ENCODE measurements at regions of chr12 and their contacts with region 1.

Region 1: DNA sequence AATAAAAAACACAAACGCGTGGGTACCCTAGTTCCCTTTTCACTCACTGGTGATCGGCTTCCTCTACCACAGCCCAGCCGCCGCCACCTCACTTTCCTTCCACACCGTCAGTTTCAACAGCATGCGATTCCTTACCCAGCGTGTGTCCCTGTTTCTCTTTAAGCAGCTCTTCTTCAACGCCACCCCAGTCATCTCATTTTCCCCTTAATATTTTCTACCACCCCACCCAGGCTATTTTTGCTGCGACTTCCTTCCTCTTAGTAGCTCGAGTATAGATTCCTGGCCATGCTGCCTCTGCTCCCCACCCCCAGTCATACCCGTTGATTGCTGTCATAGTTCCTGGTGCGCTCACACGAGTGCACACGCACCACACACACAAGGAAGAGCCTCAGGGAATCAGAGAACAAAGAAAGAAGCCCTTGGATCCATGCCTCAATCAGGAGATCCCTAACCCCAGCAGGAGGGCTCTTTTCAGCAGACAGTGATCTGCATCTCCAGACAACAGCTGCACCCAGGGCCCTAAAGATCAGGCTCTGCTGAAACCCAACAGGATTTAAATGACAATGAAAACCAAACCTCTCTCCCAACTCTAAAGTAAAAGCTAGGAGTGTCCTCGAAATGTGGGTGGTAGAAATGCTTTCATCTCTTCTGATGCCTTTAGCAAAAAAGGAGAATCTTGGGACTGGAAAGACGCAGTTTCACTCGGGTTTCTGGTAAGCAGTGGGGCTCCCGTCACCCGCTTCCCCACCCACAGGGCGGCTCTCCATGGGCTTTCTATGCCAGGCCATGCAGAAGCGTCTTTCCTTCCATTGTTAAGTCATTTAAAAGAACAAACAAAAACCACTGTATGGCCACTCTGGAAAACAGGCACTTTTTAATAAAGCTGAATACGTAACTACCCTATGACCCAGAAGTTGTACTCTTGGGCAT is 23.8 kb downstream of the VPS37B start:
- H3K4me3 Mint-ChIP-seq: peak overlapping the region; percentile 71
- H3K27ac Mint-ChIP-seq: peak overlapping the region; percentile 93
- H3K4me1 Mint-ChIP-seq: peaks cover 74% of the 10 kb centered on the region
- H3K27me3 Mint-ChIP-seq: no peaks in the 10 kb centered on the region

Region 2: DNA sequence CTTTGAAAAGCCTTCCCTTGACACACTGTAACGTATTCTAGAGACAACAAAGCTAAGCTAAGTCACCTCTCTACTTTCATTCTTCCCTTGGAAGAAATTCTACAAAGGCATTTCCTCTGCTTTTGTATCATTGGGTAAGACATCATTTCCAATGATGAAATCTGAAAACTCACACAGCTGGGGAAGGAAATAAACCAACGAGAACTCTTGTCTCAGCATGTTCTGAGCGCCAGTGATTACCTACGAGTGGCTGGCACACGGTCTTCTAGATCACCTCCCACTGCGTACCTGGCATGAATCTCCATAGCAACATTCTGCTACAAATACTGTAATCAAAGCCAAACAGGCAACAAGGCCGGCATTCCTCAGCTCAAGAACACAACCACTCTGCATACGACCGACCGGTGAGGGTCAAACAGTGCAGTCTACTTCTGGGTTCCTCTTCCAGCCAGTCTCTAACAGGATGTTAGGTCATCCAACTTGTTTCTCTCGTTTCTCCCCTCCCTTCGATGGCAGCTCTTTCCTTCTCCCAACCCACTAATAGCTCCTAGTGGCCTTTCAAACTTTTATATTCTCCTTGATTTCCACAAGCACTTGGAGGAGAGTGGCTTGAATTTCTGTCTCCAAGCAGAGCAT is 16.2 kb after region 1 on chr12:
- intact Hi-C with region 1: loop called (anchors 2 kb)
- H3K4me3 Mint-ChIP-seq: peak overlapping the region; percentile 76
- H3K27ac Mint-ChIP-seq: peak overlapping the region; percentile 86
- H3K4me1 Mint-ChIP-seq: peaks cover 78% of the 10 kb centered on the region
- H3K27me3 Mint-ChIP-seq: no peaks in the 10 kb centered on the region

Region 3: DNA sequence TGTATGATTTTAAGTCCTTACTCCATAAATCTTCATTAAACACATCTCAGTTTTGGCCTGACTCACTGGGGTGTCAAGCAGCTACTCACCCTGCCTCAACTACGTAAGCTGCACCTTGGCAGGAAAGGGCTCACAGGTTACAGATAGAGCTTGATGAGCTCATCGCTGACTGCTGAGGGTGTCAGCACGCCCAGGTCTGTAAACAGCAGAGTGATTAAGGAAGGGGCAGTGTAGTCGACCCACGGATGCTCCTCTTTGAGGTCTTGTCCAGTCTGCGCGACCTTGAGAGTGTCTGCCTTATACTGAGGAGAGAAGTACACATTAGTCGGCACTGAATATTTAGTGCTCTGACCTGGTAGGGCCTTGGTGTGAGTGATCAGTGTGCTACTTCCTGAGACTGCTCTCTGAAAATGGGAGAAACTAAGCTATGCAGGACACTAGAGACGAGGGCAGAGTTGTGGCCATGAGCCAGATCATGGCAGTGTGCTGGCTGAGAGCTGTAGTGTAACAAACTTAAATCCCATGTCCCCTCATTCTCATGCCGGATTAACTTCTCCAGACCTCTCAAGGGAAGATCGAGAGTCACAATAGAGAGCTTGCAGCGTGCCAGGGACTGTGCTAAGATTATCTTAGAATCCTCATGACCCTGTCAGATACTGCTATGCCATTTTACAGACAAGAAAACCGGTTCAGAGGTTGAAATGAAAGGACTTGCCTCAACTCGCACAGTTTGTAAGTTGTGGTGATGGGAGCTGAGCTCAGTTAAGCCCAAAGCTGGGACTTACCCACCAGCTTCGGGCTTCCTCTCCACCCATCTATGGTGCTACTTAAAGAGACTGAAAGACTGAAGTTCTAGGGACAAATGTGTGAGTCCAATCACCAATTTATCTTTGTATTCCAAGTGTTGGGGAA is 749.8 kb after region 1 on chr12:
- intact Hi-C with region 1: no loop called
- H3K4me3 Mint-ChIP-seq: no peak overlapping the region
- H3K27ac Mint-ChIP-seq: no peak overlapping the region
- H3K4me1 Mint-ChIP-seq: no peaks in the 10 kb centered on the region
- H3K27me3 Mint-ChIP-seq: no peaks in the 10 kb centered on the region